ENCODE measurements at regions of chr1 and their contacts with region 1.

Region 1: GRCh38 chr1:155648551-155649147 is 38.6 kb downstream of the MSTO1 start:
- DNase-seq: peak; percentile 51 to 93
- H3K4me3 ChIP-seq: peak overlapping the region; percentile 58; the same call in 1 of the 2 replicates
- H3K27ac ChIP-seq: peak overlapping the region; percentile 83
- H3K4me1 ChIP-seq: peaks cover 31% of the 10 kb centered on the region
- H3K27me3 ChIP-seq: no peaks in the 10 kb centered on the region
- CTCF ChIP-seq: peak; percentile 61; the same call in 1 of the 2 replicates

Region 2: GRCh38 chr1:155244368-155245162 is 404.1 kb before region 1 on chr1:
- CTCF ChIA-PET with region 1: no interaction called
- POLR2A ChIA-PET with region 1: no interaction called
- intact Hi-C with region 1: loop called (anchors 1 kb)
- DNase-seq: peak; percentile 94 to 96
- H3K4me3 ChIP-seq: peak overlapping the region; percentile 75
- H3K27ac ChIP-seq: peak overlapping the region; percentile 72
- H3K4me1 ChIP-seq: peaks cover 26% of the 10 kb centered on the region
- H3K27me3 ChIP-seq: no peaks in the 10 kb centered on the region
- CTCF ChIP-seq: peak; percentile 91

Region 3: GRCh38 chr1:155308493-155309422 is 339.9 kb before region 1 on chr1 and contains the start of gene FDPS:
- CTCF ChIA-PET with region 1: no interaction called
- POLR2A ChIA-PET with region 1: interaction called, 10 read pairs
- intact Hi-C with region 1: no loop called
- DNase-seq: peak; percentile 97
- H3K4me3 ChIP-seq: peak within 1 kb of the TSS; percentile 88
- H3K27ac ChIP-seq: peak within 1 kb of the TSS; percentile 91
- H3K4me1 ChIP-seq: peaks cover 26% of the 10 kb centered on the region
- H3K27me3 ChIP-seq: no peaks in the 10 kb centered on the region
- CTCF ChIP-seq: no peak
- total RNA-seq, gene FDPS: 397 and 568 TPM in 2 replicates

Region 4: DNA sequence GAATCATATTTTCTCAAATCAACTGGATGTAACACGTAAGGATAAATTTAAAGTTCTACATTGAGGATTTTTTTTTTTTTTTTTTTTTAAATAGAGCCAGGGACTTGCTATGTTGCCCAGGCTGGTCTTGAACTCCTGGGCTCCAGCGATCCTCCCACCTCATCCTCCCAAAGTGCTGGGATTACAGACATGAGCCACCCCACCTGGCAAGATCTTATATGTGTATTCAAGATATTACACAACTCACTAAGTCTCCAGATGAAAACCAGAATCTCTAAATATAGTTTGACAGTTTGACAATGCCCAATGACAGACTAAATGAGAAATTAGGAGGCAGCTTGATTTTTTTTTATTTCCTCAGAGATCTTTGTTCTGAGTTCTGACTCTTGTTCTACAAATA is 33.1 kb after region 1 on chr1:
- CTCF ChIA-PET with region 1: interaction called, 10 read pairs
- POLR2A ChIA-PET with region 1: no interaction called
- intact Hi-C with region 1: no loop called
- DNase-seq: no peak
- H3K4me3 ChIP-seq: no peak overlapping the region
- H3K27ac ChIP-seq: no peak overlapping the region
- H3K4me1 ChIP-seq: peaks cover 5% of the 10 kb centered on the region; the same call in 1 of the 2 replicates
- H3K27me3 ChIP-seq: no peaks in the 10 kb centered on the region
- CTCF ChIP-seq: no peak

Region 5: DNA sequence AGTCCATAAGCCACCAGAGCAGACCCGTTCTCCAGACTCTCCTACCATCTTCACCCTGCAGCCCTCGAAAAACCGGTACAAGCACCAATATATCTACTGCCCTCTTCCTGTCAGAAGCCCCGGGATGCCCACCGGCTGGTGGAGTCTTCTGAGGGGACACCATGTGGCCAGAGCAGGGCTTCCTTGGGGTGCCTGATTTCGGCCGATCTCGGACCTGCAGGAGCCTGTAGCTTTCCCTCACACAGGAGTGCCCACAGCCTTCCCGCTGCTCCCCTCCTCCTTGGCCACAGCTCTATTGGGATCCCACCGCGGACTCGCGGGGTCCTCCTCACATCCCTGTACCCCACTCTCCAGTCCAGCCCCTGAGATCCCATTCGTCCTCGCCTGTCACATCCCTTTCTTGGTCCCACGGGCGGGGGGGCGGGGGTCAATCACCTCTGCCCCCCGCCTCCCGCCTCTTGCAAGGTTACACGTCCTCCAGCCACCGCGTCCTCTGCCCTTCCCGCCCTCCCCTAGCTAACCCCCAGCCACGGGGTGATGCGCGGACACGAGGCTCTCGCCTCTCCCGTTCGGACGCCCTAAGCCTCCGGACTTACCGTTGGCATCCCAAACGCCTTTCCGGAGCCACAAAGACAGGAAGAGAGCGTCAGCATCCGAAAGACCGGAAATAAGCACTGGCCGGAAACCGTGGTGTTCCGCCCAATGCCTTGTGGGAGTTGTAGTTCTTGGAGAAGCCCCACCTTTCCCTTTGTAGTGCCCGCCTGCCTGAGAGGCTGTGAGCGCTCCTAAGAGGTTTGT is 371.8 kb after region 1 on chr1 and contains the start of gene SSR2:
- CTCF ChIA-PET with region 1: interaction called, 14 read pairs
- POLR2A ChIA-PET with region 1: no interaction called
- intact Hi-C with region 1: no loop called
- DNase-seq: peak; percentile 78 to 87
- H3K4me3 ChIP-seq: peak within 1 kb of the TSS; percentile 95
- H3K27ac ChIP-seq: no peak within 1 kb of the TSS
- H3K4me1 ChIP-seq: peaks cover 11% of the 10 kb centered on the region
- H3K27me3 ChIP-seq: no peaks in the 10 kb centered on the region
- CTCF ChIP-seq: no peak
- total RNA-seq, gene SSR2: 152 and 196 TPM in 2 replicates

Measured in PC-9 (cell line).